ENCODE measurements at regions of chr4 and their contacts with region 1.

Region 1: DNA sequence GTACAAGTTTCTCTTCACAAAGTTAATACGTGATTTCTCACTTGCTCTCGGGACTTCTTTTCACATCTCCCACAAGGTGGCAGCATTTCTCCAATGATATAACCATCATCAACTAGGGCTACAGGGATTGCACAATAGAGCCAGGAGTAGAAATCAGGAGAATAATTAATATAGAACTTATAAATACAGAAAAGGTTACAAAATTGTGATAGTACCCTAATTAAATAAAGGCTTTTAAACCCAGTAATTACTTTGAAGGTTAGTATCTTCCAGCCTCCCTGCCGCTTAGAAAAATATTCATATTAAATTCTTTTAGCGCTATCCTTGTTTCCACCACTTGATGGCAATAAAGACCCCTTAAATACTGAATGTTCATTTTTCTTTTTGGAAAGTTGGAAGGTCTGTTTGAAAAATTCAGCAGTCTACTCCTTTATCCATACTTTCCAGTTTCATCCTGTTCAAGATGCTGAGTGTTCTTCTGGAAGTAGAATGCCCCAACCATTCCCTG is 65.8 kb downstream of the RASGEF1B start:
- DNase-seq: no peak
- ATAC-seq: peak; percentile 81
- H3K4me3 Mint-ChIP-seq: no peak overlapping the region
- H3K27ac Mint-ChIP-seq: no peak overlapping the region
- H3K4me1 Mint-ChIP-seq: peaks cover 3% of the 10 kb centered on the region
- H3K27me3 Mint-ChIP-seq: peaks cover 3% of the 10 kb centered on the region
- CTCF ChIP-seq: peak; percentile 93

Region 2: GRCh38 chr4:81052119-81053068 is 353.6 kb before region 1 on chr4:
- CTCF ChIA-PET with region 1: no interaction called
- POLR2A ChIA-PET with region 1: no interaction called
- intact Hi-C with region 1: no loop called
- DNase-seq: peak; percentile 31
- ATAC-seq: peak; percentile 84
- H3K4me3 Mint-ChIP-seq: no peak overlapping the region
- H3K27ac Mint-ChIP-seq: no peak overlapping the region
- H3K4me1 Mint-ChIP-seq: peaks cover 14% of the 10 kb centered on the region
- H3K27me3 Mint-ChIP-seq: no peaks in the 10 kb centered on the region
- CTCF ChIP-seq: no peak

Region 3: GRCh38 chr4:81421346-81422218 is 15.6 kb after region 1 on chr4:
- CTCF ChIA-PET with region 1: interaction called, 4 read pairs
- POLR2A ChIA-PET with region 1: no interaction called
- intact Hi-C with region 1: loop called (anchors 1 kb)
- DNase-seq: no peak
- ATAC-seq: peak; percentile 99
- H3K4me3 Mint-ChIP-seq: peak overlapping the region; percentile 38
- H3K27ac Mint-ChIP-seq: peak overlapping the region; percentile 83
- H3K4me1 Mint-ChIP-seq: peaks cover 49% of the 10 kb centered on the region
- H3K27me3 Mint-ChIP-seq: no peaks in the 10 kb centered on the region
- CTCF ChIP-seq: no peak

Region 4: DNA sequence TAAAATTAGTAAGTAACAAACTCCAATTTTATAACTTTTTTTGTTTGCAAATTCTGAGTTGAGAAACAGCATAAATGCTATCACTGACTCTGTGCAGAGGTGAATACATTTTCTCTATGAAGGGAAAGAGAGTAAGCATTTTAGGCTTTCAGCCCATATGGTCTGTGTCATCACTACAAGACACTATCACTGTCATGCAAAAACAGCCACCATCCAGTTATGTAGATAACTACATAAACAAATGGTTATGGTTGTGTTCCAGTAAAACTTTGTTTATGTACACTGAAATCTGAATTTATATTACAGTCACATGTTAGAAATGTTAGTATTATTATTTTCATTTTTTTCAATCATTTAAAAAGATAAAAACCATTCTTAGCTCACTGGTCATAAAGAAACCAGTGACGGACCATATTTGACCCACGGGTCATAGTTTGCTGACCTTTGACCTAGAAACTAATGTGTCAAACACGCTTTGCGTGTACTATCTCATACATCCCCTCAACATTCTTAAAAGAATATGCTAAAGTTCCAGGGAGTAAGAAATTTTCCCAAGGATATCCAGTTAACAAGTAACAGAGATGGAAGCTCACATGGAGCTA is 36.6 kb after region 1 on chr4:
- CTCF ChIA-PET with region 1: no interaction called
- POLR2A ChIA-PET with region 1: no interaction called
- intact Hi-C with region 1: loop called (anchors 5 kb)
- DNase-seq: no peak
- ATAC-seq: no peak
- H3K4me3 Mint-ChIP-seq: no peak overlapping the region
- H3K27ac Mint-ChIP-seq: no peak overlapping the region
- H3K4me1 Mint-ChIP-seq: no peaks in the 10 kb centered on the region
- H3K27me3 Mint-ChIP-seq: no peaks in the 10 kb centered on the region
- CTCF ChIP-seq: no peak

Region 5: GRCh38 chr4:81919238-81919637 is 513.3 kb after region 1 on chr4:
- CTCF ChIA-PET with region 1: interaction called, 4 read pairs
- POLR2A ChIA-PET with region 1: no interaction called
- intact Hi-C with region 1: loop called (anchors 1 kb)
- DNase-seq: no peak
- ATAC-seq: peak; percentile 72
- H3K4me3 Mint-ChIP-seq: no peak overlapping the region
- H3K27ac Mint-ChIP-seq: no peak overlapping the region
- H3K4me1 Mint-ChIP-seq: no peaks in the 10 kb centered on the region
- H3K27me3 Mint-ChIP-seq: peaks cover 9% of the 10 kb centered on the region
- CTCF ChIP-seq: no peak

Region 6: DNA sequence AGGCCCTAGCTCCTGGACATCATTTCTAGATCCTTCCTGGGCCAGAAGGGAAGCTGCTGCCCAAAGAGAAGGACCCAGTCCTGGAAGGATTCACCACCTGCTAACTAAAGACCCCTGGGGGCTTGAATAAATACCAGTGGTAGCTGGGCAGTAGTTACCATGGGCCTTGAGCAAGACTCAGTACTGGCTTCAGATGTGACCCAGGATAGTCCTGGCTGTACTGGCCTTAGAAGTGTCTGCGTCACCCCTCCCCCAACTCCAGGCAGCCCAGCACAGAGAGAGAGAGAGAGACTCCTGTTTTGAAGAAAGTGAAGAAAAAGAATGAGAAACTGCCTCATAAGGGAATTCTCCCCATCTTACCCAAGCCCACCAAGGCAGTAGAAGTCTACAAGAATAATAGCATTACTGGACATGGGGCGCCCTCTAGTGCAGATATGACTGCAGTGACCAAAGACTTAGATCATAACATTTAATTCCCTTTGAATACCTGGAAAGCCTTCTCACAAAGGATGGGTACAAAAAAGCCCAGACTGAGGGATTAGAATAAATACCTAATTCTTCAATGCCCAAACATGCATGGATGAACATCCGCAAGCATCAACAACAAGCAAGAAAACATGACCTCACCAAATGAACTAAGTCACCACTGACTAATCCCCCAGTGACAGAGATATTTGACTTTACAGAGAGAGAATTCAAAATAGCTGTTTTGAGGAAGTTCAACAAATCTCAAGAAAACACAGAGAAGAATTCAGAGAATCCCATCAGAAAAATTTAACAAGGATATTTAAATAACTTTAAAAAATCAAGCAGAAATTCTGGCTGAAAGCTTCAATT is 796.1 kb after region 1 on chr4:
- CTCF ChIA-PET with region 1: interaction called, 7 read pairs
- POLR2A ChIA-PET with region 1: no interaction called
- intact Hi-C with region 1: loop called (anchors 1 kb)
- DNase-seq: no peak
- ATAC-seq: peak; percentile 50
- H3K4me3 Mint-ChIP-seq: no peak overlapping the region
- H3K27ac Mint-ChIP-seq: no peak overlapping the region
- H3K4me1 Mint-ChIP-seq: no peaks in the 10 kb centered on the region
- H3K27me3 Mint-ChIP-seq: peaks cover 16% of the 10 kb centered on the region
- CTCF ChIP-seq: no peak

Region 7: DNA sequence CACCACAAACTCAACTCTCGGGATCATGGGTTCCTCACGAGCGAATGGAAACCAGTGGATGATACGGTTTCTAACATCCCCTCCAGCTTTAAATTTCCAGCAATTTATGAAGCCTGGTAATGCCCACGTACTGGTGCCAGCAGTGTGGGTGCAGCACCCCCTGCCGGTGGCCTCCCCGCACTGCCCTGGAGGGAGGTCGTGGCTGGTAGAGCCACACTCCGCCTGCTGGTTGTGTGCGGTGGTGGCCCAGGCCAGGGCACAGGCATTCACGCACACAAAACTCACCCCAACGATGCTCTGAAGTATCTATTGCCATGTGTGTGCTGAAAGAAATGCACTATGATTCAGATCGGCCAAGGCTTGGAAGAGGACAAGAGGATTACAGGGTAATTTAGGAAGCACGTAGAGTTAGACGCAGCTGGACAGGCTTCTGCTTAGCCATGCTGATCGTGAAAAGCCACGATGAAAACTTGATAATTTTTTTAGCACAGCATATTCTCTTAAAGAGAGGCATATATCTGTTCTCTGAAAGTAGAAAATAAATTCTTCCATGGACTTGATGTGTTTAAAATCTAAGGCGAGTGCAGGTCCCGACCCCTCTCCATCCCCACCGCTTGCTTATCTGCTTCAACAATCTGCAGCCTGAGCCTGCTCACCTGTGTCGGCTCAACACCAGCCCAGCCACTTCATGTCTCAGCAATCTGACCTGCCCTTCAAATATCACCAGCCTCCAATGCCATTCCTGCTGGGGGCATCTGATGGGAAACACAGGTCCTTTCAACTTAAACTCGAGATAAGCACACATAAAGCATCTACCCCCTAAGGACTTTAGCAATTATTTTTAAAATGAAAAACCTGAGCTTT is 1333.6 kb after region 1 on chr4:
- CTCF ChIA-PET with region 1: no interaction called
- POLR2A ChIA-PET with region 1: no interaction called
- intact Hi-C with region 1: loop called (anchors 5 kb)
- DNase-seq: peak; percentile 27
- ATAC-seq: peak; percentile 49
- H3K4me3 Mint-ChIP-seq: no peak overlapping the region
- H3K27ac Mint-ChIP-seq: no peak overlapping the region
- H3K4me1 Mint-ChIP-seq: no peaks in the 10 kb centered on the region
- H3K27me3 Mint-ChIP-seq: peaks cover 8% of the 10 kb centered on the region
- CTCF ChIP-seq: no peak